PC-3 (cell line): ENCODE measurements at regions of chr1 and their contacts with region 1.

Region 1: DNA sequence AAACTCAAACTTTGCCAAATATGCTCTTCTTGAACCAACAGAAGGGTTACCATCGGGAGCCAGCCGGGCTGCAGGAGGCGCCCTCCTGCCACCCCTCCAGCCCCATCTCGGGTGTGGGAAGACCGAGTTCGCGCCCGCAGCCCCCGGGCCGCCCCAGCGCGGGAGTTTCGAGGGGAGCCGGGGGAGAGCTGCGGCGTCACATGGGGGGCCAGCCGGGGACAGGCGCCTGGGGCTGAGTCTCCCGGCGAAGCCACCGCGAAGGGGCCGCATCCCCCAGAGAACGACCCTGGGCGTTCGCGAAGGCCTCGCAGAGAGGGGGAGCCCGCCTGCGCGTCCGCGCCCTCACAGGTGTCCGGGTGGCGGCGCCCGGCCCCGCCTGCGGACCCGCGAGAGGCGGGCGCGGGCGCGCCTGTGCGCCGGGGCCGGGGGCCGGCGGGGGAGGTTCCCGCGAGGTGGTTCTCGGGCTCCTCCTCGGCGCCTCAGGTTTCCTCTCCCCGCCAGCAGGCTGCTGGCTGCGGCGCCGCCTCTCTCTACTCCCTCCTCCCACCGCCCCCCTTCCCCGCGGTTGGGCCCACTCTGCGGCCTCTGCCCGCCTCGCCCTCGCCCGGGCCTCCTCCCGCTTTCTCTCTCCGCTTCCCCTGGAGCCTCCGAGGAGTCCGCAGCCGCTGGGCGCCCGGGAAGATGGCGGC is at the start of gene RAVER2:
- DNase-seq: peak; percentile 78
- ATAC-seq: peak; percentile 79
- H3K4me3 ChIP-seq: peak within 1 kb of the TSS; percentile 100
- H3K27ac ChIP-seq: no peak within 1 kb of the TSS
- H3K4me1 ChIP-seq: peaks cover 24% of the 10 kb centered on the region
- H3K27me3 ChIP-seq: no peaks in the 10 kb centered on the region
- CTCF ChIP-seq: peak; percentile 77
- total RNA-seq, gene RAVER2: 11.4 and 12.2 TPM in 2 replicates

Region 2: GRCh38 chr1:63746129-63746864 is 998.3 kb before region 1 on chr1:
- CTCF ChIA-PET with region 1: no interaction called
- POLR2A ChIA-PET with region 1: no interaction called
- intact Hi-C with region 1: no loop called
- DNase-seq: peak; percentile 93
- ATAC-seq: peak; percentile 96
- H3K4me3 ChIP-seq: peak overlapping the region; percentile 31; the same call in 1 of the 2 replicates
- H3K27ac ChIP-seq: peak overlapping the region; percentile 100
- H3K4me1 ChIP-seq: peaks cover 25% of the 10 kb centered on the region
- H3K27me3 ChIP-seq: no peaks in the 10 kb centered on the region
- CTCF ChIP-seq: no peak

Region 3: GRCh38 chr1:64686828-64687724 is 57.6 kb before region 1 on chr1:
- CTCF ChIA-PET with region 1: no interaction called
- POLR2A ChIA-PET with region 1: no interaction called
- intact Hi-C with region 1: loop called (anchors 1 kb)
- DNase-seq: peak; percentile 76
- ATAC-seq: peak; percentile 81
- H3K4me3 ChIP-seq: peak overlapping the region; percentile 25; the same call in 1 of the 2 replicates
- H3K27ac ChIP-seq: peak overlapping the region; percentile 70
- H3K4me1 ChIP-seq: peaks cover 28% of the 10 kb centered on the region
- H3K27me3 ChIP-seq: no peaks in the 10 kb centered on the region
- CTCF ChIP-seq: peak; percentile 90

Region 4: GRCh38 chr1:64823691-64824476 is 79.2 kb after region 1 on chr1:
- CTCF ChIA-PET with region 1: no interaction called
- POLR2A ChIA-PET with region 1: interaction called, 3 read pairs
- intact Hi-C with region 1: loop called (anchors 1 kb)
- DNase-seq: peak; percentile 84
- ATAC-seq: peak; percentile 73
- H3K4me3 ChIP-seq: no peak overlapping the region
- H3K27ac ChIP-seq: no peak overlapping the region
- H3K4me1 ChIP-seq: no peaks in the 10 kb centered on the region
- H3K27me3 ChIP-seq: no peaks in the 10 kb centered on the region
- CTCF ChIP-seq: peak; percentile 93

Region 5: DNA sequence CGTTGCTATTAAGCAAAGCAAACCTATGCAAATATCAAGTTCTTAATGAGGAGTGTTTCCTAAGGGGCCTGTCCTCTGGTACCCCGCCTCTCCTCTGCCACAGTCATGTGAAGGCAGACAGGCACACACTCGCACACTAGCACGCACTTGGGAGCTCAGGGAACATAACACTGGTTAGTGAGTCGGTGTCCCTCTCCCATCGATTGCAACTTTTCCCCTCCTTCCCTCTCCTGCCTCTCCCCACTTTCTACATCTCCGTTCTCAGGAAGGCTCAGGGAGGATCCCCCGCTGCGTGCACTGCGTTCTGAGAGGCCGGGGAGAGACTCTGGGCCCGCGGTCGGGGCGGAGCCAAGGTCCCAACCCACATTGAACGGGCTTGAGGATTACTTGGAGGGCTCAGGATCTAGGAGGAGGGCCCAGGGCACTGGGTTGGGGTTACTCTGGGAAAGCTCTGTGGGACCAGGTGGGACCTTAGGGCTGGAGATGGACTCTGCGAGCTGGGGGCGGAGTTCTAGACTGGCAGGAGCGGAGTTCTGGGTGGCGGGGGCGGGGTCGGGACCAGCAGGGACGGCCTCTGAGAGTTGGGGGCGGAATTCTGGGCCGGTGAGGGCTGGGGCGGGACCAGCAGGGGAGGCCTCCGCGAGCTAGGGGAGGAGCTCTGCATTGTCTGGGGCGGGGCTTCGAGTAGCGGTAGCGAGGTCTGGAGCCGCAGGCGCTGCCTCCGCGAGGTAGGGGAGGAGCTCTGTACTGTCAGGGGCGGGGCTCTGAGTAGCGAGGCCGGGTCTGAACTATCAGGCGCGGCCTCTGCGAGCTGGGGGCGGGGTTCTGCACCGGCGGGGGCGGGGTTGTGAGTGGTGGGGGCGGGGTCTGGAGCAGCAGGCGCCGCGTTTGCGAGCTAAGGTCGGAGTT is 675.3 kb after region 1 on chr1:
- CTCF ChIA-PET with region 1: no interaction called
- POLR2A ChIA-PET with region 1: no interaction called
- intact Hi-C with region 1: loop called (anchors 10 kb)
- DNase-seq: peak; percentile 98
- ATAC-seq: peak; percentile 86
- H3K4me3 ChIP-seq: peak overlapping the region; percentile 86
- H3K27ac ChIP-seq: peak overlapping the region; percentile 2
- H3K4me1 ChIP-seq: peaks cover 54% of the 10 kb centered on the region
- H3K27me3 ChIP-seq: no peaks in the 10 kb centered on the region
- CTCF ChIP-seq: no peak